ENCODE measurements at regions of chr2 and their contacts with region 1.

Region 1: DNA sequence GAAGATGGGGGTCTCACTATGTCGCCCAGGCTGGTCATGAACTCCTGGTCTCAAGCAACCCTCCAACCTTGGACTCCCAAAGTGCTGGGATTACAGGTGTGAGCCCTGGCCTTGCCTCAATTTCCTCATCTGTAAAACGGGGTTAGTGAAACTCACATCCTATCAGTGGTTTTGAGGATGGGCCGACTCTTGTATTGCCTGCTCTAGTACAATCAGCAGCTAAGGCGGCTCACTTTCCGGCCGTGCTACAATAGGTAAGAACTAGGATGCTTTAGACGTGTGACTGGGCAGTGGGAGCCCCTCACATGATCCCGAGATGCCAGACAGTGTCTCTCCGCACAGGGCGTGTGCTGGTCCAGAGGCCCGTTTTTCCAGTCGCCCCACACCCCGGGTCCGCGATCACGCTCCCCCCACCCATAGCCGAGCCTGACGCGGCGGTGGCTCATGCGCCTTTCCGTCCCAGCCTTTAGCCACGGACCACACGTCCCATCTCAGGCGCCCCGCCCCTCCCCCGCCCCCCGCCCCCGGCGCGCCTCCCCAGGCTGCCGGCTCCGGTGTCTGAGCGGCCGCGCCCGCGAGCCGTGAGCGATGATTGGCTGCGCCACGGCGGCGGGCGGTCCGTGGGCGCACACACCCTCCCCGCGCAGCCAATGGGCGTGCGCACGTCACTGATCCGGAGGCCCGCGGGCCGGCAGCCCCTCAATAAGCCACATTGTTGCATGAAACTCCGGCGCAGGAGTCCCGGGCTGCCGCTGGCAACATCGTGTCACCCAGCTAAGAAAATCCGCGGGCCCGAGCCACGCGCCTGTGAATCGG is at the start of gene HK2:
- DNase-seq: peak; percentile 68 to 87 (median 78)
- ATAC-seq: peak; percentile 91
- H3K4me3 ChIP-seq: peak within 1 kb of the TSS; percentile 72
- H3K4me3 Mint-ChIP-seq: peak within 1 kb of the TSS; percentile 89 to 97 (median 94)
- H3K27ac ChIP-seq: peak within 1 kb of the TSS; percentile 67
- H3K27ac Mint-ChIP-seq: peak within 1 kb of the TSS; percentile 35 to 95 (median 91)
- H3K4me1 ChIP-seq: peaks cover 14 to 32% of the 10 kb centered on the region in 2 donors
- H3K4me1 Mint-ChIP-seq: peaks cover 28 to 49% (median 33%) of the 10 kb centered on the region in 7 donors
- H3K27me3 ChIP-seq: no peaks in the 10 kb centered on the region
- H3K27me3 Mint-ChIP-seq: peaks cover 0 to 7% (median 0%) of the 10 kb centered on the region in 5 donors
- total RNA-seq, gene HK2: 11.1 to 74.6 (median 17.7) TPM

Region 2: DNA sequence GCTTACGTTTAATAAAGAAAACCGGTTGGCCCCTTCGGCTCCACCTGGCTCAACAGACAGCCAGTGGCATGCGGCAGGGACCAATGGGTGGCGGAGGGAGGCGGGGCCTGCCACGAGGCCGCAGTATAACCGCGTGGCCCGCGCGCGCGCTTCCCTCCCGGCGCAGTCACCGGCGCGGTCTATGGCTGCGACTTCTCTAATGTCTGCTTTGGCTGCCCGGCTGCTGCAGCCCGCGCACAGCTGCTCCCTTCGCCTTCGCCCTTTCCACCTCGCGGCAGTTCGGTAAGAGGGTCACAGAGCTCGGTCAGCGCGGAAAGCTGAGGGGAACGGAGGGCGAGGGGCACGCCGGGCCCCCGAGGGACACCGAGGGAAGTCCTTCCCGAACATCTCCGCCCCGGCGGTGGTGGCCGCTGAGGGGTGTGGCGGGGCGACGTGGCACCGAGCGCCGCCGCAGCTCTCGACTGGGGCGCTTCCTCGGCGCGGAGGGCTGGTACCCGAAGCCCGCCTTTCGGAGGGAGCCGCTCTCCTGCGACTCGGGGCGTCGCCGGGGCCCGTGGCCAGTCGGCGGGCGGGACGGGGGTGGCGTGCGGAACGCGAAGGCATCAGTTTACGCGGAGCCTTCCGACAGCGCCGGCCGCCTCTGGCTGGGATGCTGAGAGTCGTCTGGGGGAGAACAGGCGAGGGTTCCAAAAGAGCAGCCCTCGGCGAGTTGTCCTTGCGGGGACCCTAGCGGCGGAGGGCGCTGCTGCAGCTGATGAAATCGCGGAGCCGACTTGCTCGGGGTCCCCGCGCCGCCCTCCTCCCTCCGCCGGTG is 635.0 kb before region 1 on chr2 and contains the start of gene MTHFD2:
- CTCF ChIA-PET with region 1: no interaction called
- POLR2A ChIA-PET with region 1: no interaction called
- intact Hi-C with region 1: loop called in 1 of 2 experiments (anchors 10 kb)
- DNase-seq: peak; percentile 76 to 93 (median 82)
- ATAC-seq: peak; percentile 94
- H3K4me3 ChIP-seq: peak within 1 kb of the TSS; percentile 65
- H3K4me3 Mint-ChIP-seq: peak within 1 kb of the TSS; percentile 90 to 100 (median 96)
- H3K27ac ChIP-seq: peak within 1 kb of the TSS; percentile 88
- H3K27ac Mint-ChIP-seq: peak within 1 kb of the TSS; percentile 94 to 100 (median 97)
- H3K4me1 ChIP-seq: peaks cover 13 to 16% of the 10 kb centered on the region in 2 donors
- H3K4me1 Mint-ChIP-seq: peaks cover 29 to 50% (median 35%) of the 10 kb centered on the region in 7 donors
- H3K27me3 ChIP-seq: no peaks in the 10 kb centered on the region
- H3K27me3 Mint-ChIP-seq: no peaks in the 10 kb centered on the region
- total RNA-seq, gene MTHFD2: 14.5 to 186 (median 25.1) TPM

Region 3: GRCh38 chr2:74553892-74554645 is 279.6 kb before region 1 on chr2 and contains the start of gene LOXL3:
- CTCF ChIA-PET with region 1: no interaction called
- POLR2A ChIA-PET with region 1: no interaction called
- intact Hi-C with region 1: loop called in 1 of 2 experiments (anchors 1 kb)
- DNase-seq: peak in 8 of 9 donors; percentile 63 to 87 (median 76)
- ATAC-seq: peak; percentile 67
- H3K4me3 ChIP-seq: peak within 1 kb of the TSS; percentile 70
- H3K4me3 Mint-ChIP-seq: peak within 1 kb of the TSS; percentile 85 to 96 (median 92)
- H3K27ac ChIP-seq: peak within 1 kb of the TSS; percentile 76
- H3K27ac Mint-ChIP-seq: peak within 1 kb of the TSS; percentile 62 to 95 (median 86)
- H3K4me1 ChIP-seq: peaks cover 7 to 17% of the 10 kb centered on the region in 2 donors
- H3K4me1 Mint-ChIP-seq: peaks cover 9 to 31% (median 18%) of the 10 kb centered on the region in 7 donors
- H3K27me3 ChIP-seq: peaks cover 0 to 10% of the 10 kb centered on the region in 2 donors
- H3K27me3 Mint-ChIP-seq: peaks cover 21 to 27% (median 24%) of the 10 kb centered on the region in 5 donors
- total RNA-seq, gene LOXL3: 0.50 to 6.9 (median 0.81) TPM

Region 4: DNA sequence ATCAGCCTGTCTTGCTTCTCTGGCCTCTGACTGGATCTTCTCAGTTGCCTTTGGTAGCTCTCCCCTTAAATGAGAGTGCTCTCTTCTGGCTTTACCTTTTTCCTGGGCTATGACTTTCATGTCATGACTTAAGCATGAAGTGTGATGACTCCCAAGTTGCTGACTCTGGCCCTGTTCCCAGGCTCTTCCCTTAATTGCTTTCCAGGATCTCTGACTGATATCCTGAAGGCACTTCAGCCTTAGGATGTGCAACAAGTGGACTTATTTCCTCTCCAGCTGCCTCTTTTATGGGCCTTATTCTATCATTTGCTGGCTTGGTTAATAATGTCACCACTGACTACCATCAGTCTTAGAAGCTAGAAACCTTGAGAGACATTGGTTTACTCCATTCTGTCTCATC is 162.1 kb before region 1 on chr2:
- CTCF ChIA-PET with region 1: no interaction called
- POLR2A ChIA-PET with region 1: no interaction called
- intact Hi-C with region 1: no loop called
- DNase-seq: no peak
- ATAC-seq: no peak
- H3K4me3 ChIP-seq: no peak overlapping the region
- H3K4me3 Mint-ChIP-seq: no peak overlapping the region
- H3K27ac ChIP-seq: no peak overlapping the region
- H3K27ac Mint-ChIP-seq: no peak overlapping the region
- H3K4me1 ChIP-seq: no peaks in the 10 kb centered on the region
- H3K4me1 Mint-ChIP-seq: peaks cover 0 to 12% (median 0%) of the 10 kb centered on the region in 7 donors
- H3K27me3 ChIP-seq: no peaks in the 10 kb centered on the region
- H3K27me3 Mint-ChIP-seq: no peaks in the 10 kb centered on the region

Region 5: GRCh38 chr2:74690571-74690970 is 143.1 kb before region 1 on chr2:
- CTCF ChIA-PET with region 1: interaction called, 3 read pairs
- POLR2A ChIA-PET with region 1: no interaction called
- intact Hi-C with region 1: loop called in 1 of 2 experiments (anchors 1 kb)
- DNase-seq: peak in 6 of 9 donors; percentile 15 to 41 (median 33)
- ATAC-seq: peak; percentile 78
- H3K4me3 ChIP-seq: no peak overlapping the region
- H3K4me3 Mint-ChIP-seq: no peak overlapping the region
- H3K27ac ChIP-seq: no peak overlapping the region
- H3K27ac Mint-ChIP-seq: no peak overlapping the region
- H3K4me1 ChIP-seq: no peaks in the 10 kb centered on the region
- H3K4me1 Mint-ChIP-seq: peaks cover 0 to 2% (median 0%) of the 10 kb centered on the region in 7 donors
- H3K27me3 ChIP-seq: no peaks in the 10 kb centered on the region
- H3K27me3 Mint-ChIP-seq: peaks cover 0 to 38% (median 0%) of the 10 kb centered on the region in 5 donors

Region 6: DNA sequence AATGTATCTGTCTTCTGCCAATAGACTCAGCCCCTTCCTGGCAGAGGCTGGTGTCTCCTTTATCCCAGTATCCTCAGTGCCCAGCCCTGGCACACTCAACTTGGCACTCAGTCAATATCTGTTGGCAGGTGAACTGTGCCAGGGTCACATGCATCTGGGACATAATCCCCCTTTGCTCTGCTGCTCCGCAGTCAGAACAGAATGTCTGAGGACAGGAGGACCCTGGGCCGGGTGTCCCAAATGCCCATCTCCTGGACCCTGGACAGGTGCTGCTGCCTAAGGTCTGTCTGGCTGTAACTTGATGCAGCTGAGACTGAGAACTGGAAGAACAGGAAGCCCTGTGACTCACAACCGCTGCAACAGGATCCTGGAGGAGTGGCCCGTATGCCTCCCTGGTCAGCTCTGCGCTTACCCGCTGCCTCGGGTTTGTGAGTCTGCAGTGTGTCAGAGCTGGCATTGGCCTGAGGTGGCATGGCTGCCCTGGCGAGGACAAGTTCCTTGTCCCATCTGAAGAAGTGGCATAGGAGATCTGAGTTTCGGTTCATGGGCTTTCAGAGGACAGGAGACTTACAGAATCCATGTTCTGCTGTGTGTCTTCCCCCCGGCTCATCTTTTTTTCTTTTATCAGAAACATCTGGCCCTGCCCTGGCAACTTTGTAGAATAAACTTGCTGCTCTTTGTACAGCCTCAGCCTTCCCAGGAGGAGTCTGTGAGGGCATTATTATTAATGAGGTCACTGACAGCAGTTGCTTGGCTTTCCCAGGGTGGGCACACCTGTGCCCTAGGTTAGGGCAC is 11.8 kb after region 1 on chr2:
- CTCF ChIA-PET with region 1: interaction called, 52 read pairs
- POLR2A ChIA-PET with region 1: interaction called, 107 read pairs
- intact Hi-C with region 1: loop called (anchors 1 kb)
- DNase-seq: peak in 2 of 9 donors; percentile 23 to 51
- ATAC-seq: peak; percentile 70
- H3K4me3 ChIP-seq: peak overlapping the region; percentile 29
- H3K4me3 Mint-ChIP-seq: peak overlapping the region; percentile 65 to 87 (median 78)
- H3K27ac ChIP-seq: peak overlapping the region; percentile 39
- H3K27ac Mint-ChIP-seq: peak overlapping the region; percentile 85 to 99 (median 94)
- H3K4me1 ChIP-seq: peaks cover 37 to 97% of the 10 kb centered on the region in 2 donors
- H3K4me1 Mint-ChIP-seq: peaks cover 75 to 100% (median 97%) of the 10 kb centered on the region in 7 donors
- H3K27me3 ChIP-seq: no peaks in the 10 kb centered on the region
- H3K27me3 Mint-ChIP-seq: no peaks in the 10 kb centered on the region

Region 7: DNA sequence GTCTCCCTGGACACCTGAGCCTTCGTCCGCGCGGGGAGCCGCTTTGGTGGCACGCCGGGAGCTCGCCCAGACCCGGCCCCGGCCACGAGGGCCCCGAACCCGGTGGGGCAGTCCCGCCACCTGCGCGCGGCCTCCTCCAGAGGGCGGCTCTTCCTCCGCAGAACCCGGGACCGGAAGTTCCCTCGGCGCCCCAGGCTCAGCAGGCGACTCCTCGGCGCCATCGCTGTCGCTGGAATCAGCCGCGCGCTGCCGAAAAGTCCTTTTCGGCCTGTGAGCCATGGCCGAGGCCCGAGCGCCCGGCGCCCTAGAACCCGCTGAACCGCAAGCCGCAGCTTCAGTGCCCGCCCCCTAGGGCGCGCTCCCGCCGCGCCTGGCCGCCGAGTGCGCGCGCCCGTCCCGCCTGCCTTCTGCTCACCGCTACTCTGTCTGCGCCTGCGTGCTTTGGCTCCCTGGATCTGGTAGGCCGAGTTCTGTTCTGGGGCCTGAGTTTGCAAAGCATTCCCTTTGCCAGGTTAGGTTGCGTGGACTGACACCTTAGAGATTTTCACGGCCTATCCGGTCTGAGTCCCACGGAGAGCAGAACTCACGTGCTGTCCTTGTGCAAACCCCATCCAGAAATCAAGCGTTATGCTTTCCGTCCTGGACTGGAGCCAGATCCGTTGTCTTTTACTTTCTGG is 877.1 kb after region 1 on chr2 and contains the start of gene GCFC2:
- CTCF ChIA-PET with region 1: no interaction called
- POLR2A ChIA-PET with region 1: no interaction called
- intact Hi-C with region 1: loop called in 1 of 2 experiments (anchors 10 kb)
- DNase-seq: peak; percentile 70 to 91 (median 83)
- ATAC-seq: peak; percentile 91
- H3K4me3 ChIP-seq: peak within 1 kb of the TSS; percentile 78
- H3K4me3 Mint-ChIP-seq: peak within 1 kb of the TSS; percentile 72 to 98 (median 95)
- H3K27ac ChIP-seq: peak within 1 kb of the TSS; percentile 79
- H3K27ac Mint-ChIP-seq: peak within 1 kb of the TSS; percentile 96 to 98 (median 98)
- H3K4me1 ChIP-seq: peaks cover 0 to 13% of the 10 kb centered on the region in 2 donors
- H3K4me1 Mint-ChIP-seq: peaks cover 10 to 50% (median 33%) of the 10 kb centered on the region in 7 donors
- H3K27me3 ChIP-seq: no peaks in the 10 kb centered on the region
- H3K27me3 Mint-ChIP-seq: peaks cover 0 to 10% (median 4%) of the 10 kb centered on the region in 5 donors
- total RNA-seq, gene GCFC2: 15.8 to 29.1 (median 23.5) TPM

Measured in naive thymus-derived CD4-positive, alpha-beta T cell (primary cell).